ENCODE measurements at regions of chr3 and their contacts with region 1.

Region 1: DNA sequence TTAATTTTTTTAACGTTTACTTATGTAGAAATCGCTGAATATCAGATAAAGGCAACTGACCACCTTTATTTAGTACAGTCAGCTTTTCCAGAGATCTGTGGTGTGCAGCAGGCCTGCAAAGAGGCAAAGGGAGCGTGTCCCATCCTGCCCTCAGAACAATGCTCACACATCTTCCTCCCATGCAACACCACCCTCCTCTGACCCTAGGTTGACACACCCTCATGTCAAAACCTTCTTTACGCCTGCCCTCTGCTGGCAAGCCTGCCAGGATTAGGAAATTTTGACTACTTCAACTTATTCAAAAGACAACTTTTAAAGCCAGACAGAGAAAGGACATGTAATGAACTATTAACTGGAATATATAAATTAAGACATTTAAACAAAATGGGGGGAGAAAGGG is 513.7 kb downstream of the FOXP1 start:
- DNase-seq: peak; percentile 57 to 73
- ATAC-seq: peak; percentile 52 to 77; a peak in 4 of 6 replicates
- H3K4me3 ChIP-seq: no peak overlapping the region
- H3K27ac ChIP-seq: peak overlapping the region in 1 of 2 experiments; percentile 43; a peak in 3 of 6 replicates
- H3K4me1 ChIP-seq: peaks cover 30% of the 10 kb centered on the region
- CTCF ChIP-seq: peak; percentile 65
- EP300 ChIP-seq: no peak
- POLR2A ChIP-seq: no peak
- RAD21 ChIP-seq: peak; percentile 73 to 83

Region 2: GRCh38 chr3:71057526-71057894 is 12.3 kb before region 1 on chr3:
- CTCF ChIA-PET with region 1: interaction called, 10 read pairs
- POLR2A ChIA-PET with region 1: no interaction called
- DNase-seq: no peak
- ATAC-seq: peak in 1 of 2 experiments; percentile 44; a peak in 1 of 6 replicates
- H3K4me3 ChIP-seq: no peak overlapping the region
- H3K27ac ChIP-seq: peak overlapping the region in 1 of 2 experiments; percentile 68; a peak in 3 of 6 replicates
- H3K4me1 ChIP-seq: peaks cover 63% of the 10 kb centered on the region
- CTCF ChIP-seq: no peak
- EP300 ChIP-seq: no peak
- POLR2A ChIP-seq: no peak
- RAD21 ChIP-seq: no peak

Region 3: DNA sequence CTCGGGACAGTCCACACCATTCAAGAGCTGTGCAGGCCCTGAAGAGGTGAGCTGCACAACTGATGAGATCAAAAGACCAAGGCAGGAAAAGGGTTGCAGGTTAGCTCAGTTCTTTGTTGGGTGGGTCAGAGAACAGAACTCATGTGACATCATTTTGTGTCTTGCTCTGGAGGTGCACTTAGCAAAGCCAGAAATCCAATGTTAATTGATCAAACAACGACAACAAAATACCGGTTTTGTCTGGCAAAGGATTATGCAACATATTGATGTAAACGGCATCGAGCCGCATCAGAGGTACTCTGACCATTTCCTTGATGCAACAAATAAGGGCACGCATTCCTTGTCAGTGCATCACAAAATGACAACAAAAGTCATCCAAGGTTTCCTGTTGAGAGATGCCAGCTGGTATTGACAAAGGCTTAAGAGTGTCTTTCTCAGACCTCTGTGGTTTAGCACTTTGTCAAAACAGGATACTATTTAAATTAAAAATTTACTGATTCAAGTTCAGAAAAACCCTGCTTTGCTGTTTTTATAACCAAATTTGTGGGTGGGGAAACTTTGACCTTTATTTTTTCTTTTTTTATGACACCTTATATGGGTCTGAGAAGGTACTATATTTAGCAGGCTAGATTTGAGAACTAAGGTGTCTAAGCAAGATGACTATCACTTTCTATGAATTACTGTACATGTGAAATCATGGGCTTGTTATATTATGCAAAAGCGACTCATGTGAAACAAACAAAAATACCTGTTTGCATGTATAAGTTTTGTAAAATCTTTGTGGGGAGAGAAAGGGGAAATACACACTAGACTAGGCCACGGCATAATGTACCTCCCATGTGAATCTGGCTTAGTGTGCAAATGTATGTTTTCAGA is 17.6 kb after region 1 on chr3:
- CTCF ChIA-PET with region 1: interaction called, 10 read pairs
- POLR2A ChIA-PET with region 1: no interaction called
- DNase-seq: peak in 1 of 2 experiments; percentile 64
- ATAC-seq: peak; percentile 34 to 67; a peak in 4 of 6 replicates
- H3K4me3 ChIP-seq: no peak overlapping the region
- H3K27ac ChIP-seq: peak overlapping the region; percentile 16 to 56; a peak in 3 of 6 replicates
- H3K4me1 ChIP-seq: peaks cover 36% of the 10 kb centered on the region
- CTCF ChIP-seq: no peak
- EP300 ChIP-seq: peak in 1 of 2 experiments; percentile 43; a peak in 2 of 5 replicates
- POLR2A ChIP-seq: no peak
- RAD21 ChIP-seq: no peak